Keratinocyte (primary cell): ENCODE measurements at regions of chr10 and their contacts with region 1.

Region 1: DNA sequence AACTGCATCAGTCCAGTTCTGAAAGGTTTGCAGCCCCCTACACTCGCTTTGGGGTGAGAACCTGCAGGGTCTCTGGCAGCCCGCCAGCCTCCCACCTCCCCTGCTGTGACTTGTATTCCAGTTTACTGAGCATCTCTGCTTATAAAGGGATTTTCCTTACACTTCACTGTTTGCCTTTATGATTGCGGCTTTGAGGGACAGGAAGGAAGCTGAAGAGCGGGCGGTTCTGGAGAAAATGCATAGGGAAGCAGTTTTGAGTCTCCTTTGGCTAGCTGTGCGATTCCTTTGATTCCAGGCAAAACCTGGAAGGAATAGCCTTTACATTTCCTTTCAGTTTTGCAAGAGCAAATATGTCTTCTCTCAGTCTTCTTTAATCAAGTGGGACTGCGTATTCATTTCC is 65.0 kb upstream of the TRIM8 start:
- DNase-seq: no peak
- H3K4me3 ChIP-seq: no peak overlapping the region
- H3K27ac ChIP-seq: no peak overlapping the region
- H3K4me1 ChIP-seq: no peaks in the 10 kb centered on the region
- H3K27me3 ChIP-seq: no peaks in the 10 kb centered on the region
- CTCF ChIP-seq: no peak

Region 2: GRCh38 chr10:102503281-102504220 is 75.8 kb before region 1 on chr10 and contains the start of gene SUFU:
- dilution Hi-C with region 1: loop called (anchors 10 kb)
- DNase-seq: peak; percentile 99
- H3K4me3 ChIP-seq: peak within 1 kb of the TSS; percentile 82 to 94 (median 89)
- H3K27ac ChIP-seq: peak within 1 kb of the TSS; percentile 40
- H3K4me1 ChIP-seq: peaks cover 21% of the 10 kb centered on the region
- H3K27me3 ChIP-seq: no peaks in the 10 kb centered on the region
- CTCF ChIP-seq: peak; percentile 84 to 93 (median 93)
- polyA plus RNA-seq, gene SUFU: 3.7 to 6.8 TPM (median 4.8 TPM) in 3 replicates

Region 3: GRCh38 chr10:102615361-102615760 is 36.0 kb after region 1 on chr10:
- dilution Hi-C with region 1: no loop called
- DNase-seq: no peak
- H3K4me3 ChIP-seq: no peak overlapping the region
- H3K27ac ChIP-seq: no peak overlapping the region
- H3K4me1 ChIP-seq: peaks cover 15% of the 10 kb centered on the region
- H3K27me3 ChIP-seq: no peaks in the 10 kb centered on the region
- CTCF ChIP-seq: peak; percentile 42 to 56 (median 46)